ENCODE measurements at regions of chr3 and their contacts with region 1.

Region 1: GRCh38 chr3:135965506-135966270 is at the start of gene PPP2R3A:
- DNase-seq: peak; percentile 87 to 92 (median 88)
- ATAC-seq: peak; percentile 89 to 98 (median 94)
- H3K4me3 ChIP-seq: peak within 1 kb of the TSS; percentile 60 to 96 (median 79)
- H3K27ac ChIP-seq: peak within 1 kb of the TSS; percentile 72 to 98 (median 90)
- H3K4me1 ChIP-seq: peaks cover 0 to 40% (median 11%) of the 10 kb centered on the region in 12 donors
- H3K27me3 ChIP-seq: no peaks in the 10 kb centered on the region
- CTCF ChIP-seq: no peak
- POLR2A ChIP-seq: peak in 1 of 2 donors; percentile 46
- total RNA-seq, gene PPP2R3A: 46.8 to 136 (median 95.5) TPM

Region 2: DNA sequence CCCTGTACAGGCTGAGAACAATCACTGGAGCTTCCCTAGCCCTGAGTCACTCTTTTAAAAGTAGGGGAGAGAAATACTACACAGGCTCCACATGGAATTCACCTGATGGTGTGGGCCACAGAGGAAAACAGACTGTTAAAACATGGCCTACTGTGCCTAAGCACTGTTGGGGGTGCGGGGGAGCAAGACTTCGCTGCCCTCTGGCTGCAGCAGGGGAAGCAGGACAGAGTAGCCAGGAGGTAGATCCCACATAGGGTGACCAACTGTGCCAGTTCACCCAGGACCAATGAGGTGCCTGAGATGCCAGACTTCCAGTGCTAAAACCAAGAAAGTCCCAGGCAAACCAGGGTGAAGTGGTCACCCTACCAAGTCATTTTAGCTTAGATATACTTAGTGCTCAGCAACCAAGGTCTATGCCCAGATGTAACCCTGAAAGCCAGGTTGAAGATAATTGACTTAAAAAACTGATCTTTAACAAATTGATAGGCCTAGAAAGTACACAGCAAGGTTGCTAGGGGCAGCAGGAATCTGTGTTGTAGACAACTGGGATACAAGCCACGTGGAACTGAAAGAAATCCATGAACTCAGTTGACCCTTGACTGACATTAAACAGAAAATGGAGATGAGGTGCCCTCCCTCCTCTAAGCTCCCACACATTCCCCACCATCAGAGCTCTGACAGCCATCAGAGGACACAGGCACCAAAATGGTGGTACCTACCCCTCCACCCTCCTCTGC is 344.3 kb before region 1 on chr3:
- intact Hi-C with region 1: no loop called
- DNase-seq: no peak
- ATAC-seq: no peak
- H3K4me3 ChIP-seq: no peak overlapping the region
- H3K27ac ChIP-seq: no peak overlapping the region
- H3K4me1 ChIP-seq: no peaks in the 10 kb centered on the region
- H3K27me3 ChIP-seq: no peaks in the 10 kb centered on the region
- CTCF ChIP-seq: no peak
- POLR2A ChIP-seq: no peak

Region 3: DNA sequence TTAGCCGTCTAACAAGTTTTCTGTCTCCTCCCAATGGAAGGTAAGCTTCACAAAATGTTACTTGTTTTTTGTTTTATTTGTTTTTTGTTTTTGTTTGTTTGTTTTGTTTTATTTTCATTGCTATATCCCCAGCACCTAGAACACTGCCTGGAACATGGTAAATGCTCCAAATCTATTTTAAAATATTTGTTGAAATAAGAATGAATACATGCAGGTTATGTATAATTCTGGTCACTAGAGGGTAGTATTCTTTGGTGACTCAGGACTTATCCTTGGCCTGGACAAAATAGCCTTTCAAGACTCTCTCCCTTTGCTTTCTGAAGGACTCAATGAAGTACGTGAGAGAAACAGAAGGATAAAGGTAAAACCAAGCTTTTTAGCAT is 47.1 kb before region 1 on chr3:
- intact Hi-C with region 1: loop called in 1 of 10 experiments (anchors 5 kb)
- DNase-seq: no peak
- ATAC-seq: peak; percentile 47 to 77 (median 67)
- H3K4me3 ChIP-seq: no peak overlapping the region
- H3K27ac ChIP-seq: no peak overlapping the region
- H3K4me1 ChIP-seq: peaks cover 0 to 6% (median 0%) of the 10 kb centered on the region in 12 donors
- H3K27me3 ChIP-seq: no peaks in the 10 kb centered on the region
- CTCF ChIP-seq: peak; percentile 19 to 64 (median 46)
- POLR2A ChIP-seq: no peak

Region 4: GRCh38 chr3:136022529-136023263 is 57.0 kb after region 1 on chr3:
- intact Hi-C with region 1: loop called in 9 of 10 experiments (anchors 2 to 10 kb)
- DNase-seq: no peak
- ATAC-seq: peak; percentile 73 to 92 (median 82)
- H3K4me3 ChIP-seq: peak overlapping the region; percentile 5 to 63 (median 46)
- H3K27ac ChIP-seq: peak overlapping the region; percentile 58 to 93 (median 82)
- H3K4me1 ChIP-seq: peaks cover 0 to 49% (median 17%) of the 10 kb centered on the region in 12 donors
- H3K27me3 ChIP-seq: no peaks in the 10 kb centered on the region
- CTCF ChIP-seq: no peak
- POLR2A ChIP-seq: no peak

Region 5: GRCh38 chr3:136042608-136043221 is 77.0 kb after region 1 on chr3:
- intact Hi-C with region 1: loop called in 1 of 10 experiments (anchors 5 kb)
- DNase-seq: no peak
- ATAC-seq: peak in 2 of 4 donors; percentile 47
- H3K4me3 ChIP-seq: no peak overlapping the region
- H3K27ac ChIP-seq: peak overlapping the region in 1 of 12 donors; percentile 19
- H3K4me1 ChIP-seq: peaks cover 0 to 28% (median 0%) of the 10 kb centered on the region in 12 donors
- H3K27me3 ChIP-seq: no peaks in the 10 kb centered on the region
- CTCF ChIP-seq: peak; percentile 36 to 72 (median 66)
- POLR2A ChIP-seq: no peak

Region 6: DNA sequence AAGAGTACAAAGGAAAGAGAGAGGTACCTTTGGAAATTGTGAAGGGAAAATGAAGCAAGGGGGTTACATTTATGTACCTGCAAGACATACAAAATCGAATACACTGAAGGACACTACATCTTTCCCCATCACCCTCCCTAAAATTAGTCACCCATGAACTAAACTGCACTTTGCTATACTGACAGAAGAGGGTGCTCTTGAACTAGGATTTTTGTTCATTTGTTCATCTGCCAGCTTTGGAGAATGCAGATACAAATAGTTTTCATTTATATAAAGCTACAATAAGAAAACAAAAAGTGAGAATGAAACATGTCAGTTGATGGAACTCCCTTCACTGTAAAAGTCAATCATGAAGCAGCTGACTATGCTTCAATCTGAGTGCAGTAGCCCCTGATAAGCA is 340.2 kb after region 1 on chr3:
- intact Hi-C with region 1: no loop called
- DNase-seq: no peak
- ATAC-seq: no peak
- H3K4me3 ChIP-seq: no peak overlapping the region
- H3K27ac ChIP-seq: no peak overlapping the region
- H3K4me1 ChIP-seq: no peaks in the 10 kb centered on the region
- H3K27me3 ChIP-seq: no peaks in the 10 kb centered on the region
- CTCF ChIP-seq: peak in 7 of 12 donors; percentile 7 to 46 (median 19)
- POLR2A ChIP-seq: no peak

Measured in heart left ventricle (tissue), 16 donors.